Heart right ventricle (tissue), 16 donors: ENCODE measurements at regions of chr21 and their contacts with region 1.

Region 1: GRCh38 chr21:20040768-20041167 is 957.4 kb upstream of the NCAM2 start:
- DNase-seq: no peak
- ATAC-seq: no peak
- H3K4me3 ChIP-seq: no peak overlapping the region
- H3K27ac ChIP-seq: no peak overlapping the region
- H3K4me1 ChIP-seq: no peaks in the 10 kb centered on the region
- H3K27me3 ChIP-seq: no peaks in the 10 kb centered on the region
- CTCF ChIP-seq: peak in 7 of 9 donors; percentile 39 to 61 (median 47)

Region 2: DNA sequence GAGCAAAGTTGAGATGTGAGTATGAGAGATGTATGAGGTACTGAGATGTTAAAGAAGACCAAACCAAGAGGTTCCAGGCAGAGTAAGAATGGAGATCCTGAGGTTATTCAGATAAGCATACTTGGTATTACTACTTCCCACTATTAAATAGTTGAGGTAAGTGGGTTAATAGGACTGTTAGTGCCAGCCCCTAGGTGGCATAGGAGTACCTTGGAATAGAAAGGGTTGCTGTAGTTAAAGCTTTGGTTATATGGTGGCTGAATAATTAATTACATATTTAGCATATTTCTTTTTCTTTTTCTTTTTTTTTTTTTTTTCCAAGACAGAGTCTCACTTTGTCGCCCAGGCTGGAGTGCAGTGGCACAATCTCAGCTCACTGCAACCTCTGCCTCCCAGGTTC is 1239.3 kb before region 1 on chr21:
- intact Hi-C with region 1: loop called in 1 of 10 experiments (anchors 5 kb)
- DNase-seq: no peak
- ATAC-seq: peak in 2 of 8 donors; percentile 49 to 50
- H3K4me3 ChIP-seq: no peak overlapping the region
- H3K27ac ChIP-seq: no peak overlapping the region
- H3K4me1 ChIP-seq: no peaks in the 10 kb centered on the region
- H3K27me3 ChIP-seq: no peaks in the 10 kb centered on the region
- CTCF ChIP-seq: peak in 7 of 9 donors; percentile 20 to 51 (median 36)

Region 3: DNA sequence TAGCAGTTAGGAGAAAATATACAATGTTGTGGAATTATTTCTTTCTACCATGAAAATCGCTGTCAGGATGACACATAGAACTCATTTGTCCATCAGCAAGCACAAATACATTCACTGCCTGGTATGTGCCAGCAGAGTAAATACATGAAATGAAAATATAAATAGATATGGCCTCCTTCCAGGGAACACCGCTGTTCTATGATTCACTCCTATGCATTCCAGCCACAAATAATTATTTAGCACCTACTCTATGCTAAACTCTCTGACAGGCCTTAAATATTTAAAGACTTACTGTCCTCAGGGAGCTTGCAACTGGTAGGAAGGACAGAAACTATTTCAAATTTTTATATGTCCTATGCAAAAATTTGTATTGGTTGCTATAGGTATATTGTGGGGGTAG is 17.6 kb before region 1 on chr21:
- intact Hi-C with region 1: loop called in 1 of 10 experiments (anchors 2 kb)
- DNase-seq: no peak
- ATAC-seq: no peak
- H3K4me3 ChIP-seq: no peak overlapping the region
- H3K27ac ChIP-seq: no peak overlapping the region
- H3K4me1 ChIP-seq: no peaks in the 10 kb centered on the region
- H3K27me3 ChIP-seq: no peaks in the 10 kb centered on the region
- CTCF ChIP-seq: no peak